ENCODE measurements at regions of chr7 and their contacts with region 1.

Region 1: DNA sequence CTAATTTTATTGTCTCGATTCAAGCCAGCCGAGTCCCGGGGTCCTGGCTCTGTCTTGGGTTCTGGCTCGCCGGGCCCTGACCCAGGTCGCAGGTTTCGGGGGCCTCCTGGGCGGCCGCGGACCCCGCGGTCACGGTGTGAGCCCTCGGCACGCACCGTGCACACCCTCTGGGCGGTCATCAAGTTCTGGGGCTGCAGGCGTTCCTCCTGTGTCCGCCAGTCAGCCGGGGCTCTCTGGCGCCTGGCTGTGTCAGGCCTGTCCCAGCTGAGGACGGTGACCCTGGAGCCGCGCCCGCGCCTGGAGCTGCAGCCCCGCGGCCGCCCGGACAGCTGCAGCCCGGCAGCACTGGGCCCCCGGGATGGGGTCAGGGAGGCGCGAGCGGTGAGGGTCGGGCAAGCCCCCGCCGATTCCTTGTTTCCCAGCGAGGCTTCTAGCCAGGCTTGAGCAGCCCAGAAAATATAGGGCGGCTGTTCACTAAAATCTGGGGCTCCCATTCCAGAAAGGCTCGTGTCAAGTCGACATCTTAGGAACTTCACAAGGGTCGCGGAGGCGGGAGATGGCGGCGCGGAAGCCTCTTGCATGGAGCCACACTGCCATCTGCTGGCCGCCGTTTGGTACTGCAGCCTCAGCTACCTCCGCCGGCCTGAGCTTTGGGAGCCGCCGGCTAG is 4.2 kb upstream of the HOXA7 start:
- DNase-seq: peak; percentile 92
- ATAC-seq: peak; percentile 43
- H3K4me3 Mint-ChIP-seq: peak overlapping the region; percentile 29
- H3K27ac Mint-ChIP-seq: no peak overlapping the region
- H3K4me1 Mint-ChIP-seq: peaks cover 12% of the 10 kb centered on the region
- H3K27me3 Mint-ChIP-seq: peaks cover 100% of the 10 kb centered on the region
- CTCF ChIP-seq: peak; percentile 100

Region 2: DNA sequence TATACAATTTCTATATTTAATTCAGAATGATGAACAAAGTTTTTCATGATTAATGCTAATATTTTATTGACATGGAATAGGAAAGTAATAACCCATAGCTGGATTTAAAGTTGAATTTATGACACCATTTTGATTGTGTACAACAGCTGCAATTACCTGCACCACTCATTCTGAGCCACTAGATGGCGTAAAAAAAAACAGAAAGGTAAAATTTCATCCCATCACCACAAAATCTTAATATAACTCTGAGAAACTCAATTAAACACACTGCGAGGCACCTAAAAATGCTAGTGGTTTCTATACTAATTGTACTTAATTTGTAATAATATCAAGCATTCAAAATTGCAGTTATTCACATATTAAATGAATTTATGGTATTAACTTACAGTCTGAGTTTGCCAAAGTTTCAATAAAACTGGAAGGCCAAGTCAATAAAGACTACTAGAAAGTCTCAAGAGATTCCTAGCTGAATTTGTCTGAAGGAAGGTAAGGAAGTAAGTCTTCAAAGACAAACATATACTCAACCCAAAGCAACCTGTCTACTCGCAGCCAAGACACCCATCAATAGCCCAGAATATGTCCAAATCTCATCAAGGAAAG is 478.8 kb before region 1 on chr7:
- CTCF ChIA-PET with region 1: interaction called, 26 read pairs
- POLR2A ChIA-PET with region 1: no interaction called
- DNase-seq: no peak
- ATAC-seq: no peak
- H3K4me3 Mint-ChIP-seq: no peak overlapping the region
- H3K27ac Mint-ChIP-seq: no peak overlapping the region
- H3K4me1 Mint-ChIP-seq: peaks cover 5% of the 10 kb centered on the region
- H3K27me3 Mint-ChIP-seq: no peaks in the 10 kb centered on the region; the same call in 1 of the 2 replicates
- CTCF ChIP-seq: peak; percentile 42; the same call in 1 of the 2 replicates

Region 3: GRCh38 chr7:26857510-26858240 is 303.0 kb before region 1 on chr7:
- CTCF ChIA-PET with region 1: interaction called, 11 read pairs
- POLR2A ChIA-PET with region 1: no interaction called
- DNase-seq: peak; percentile 61
- ATAC-seq: peak; percentile 75
- H3K4me3 Mint-ChIP-seq: peak overlapping the region; percentile 62
- H3K27ac Mint-ChIP-seq: no peak overlapping the region
- H3K4me1 Mint-ChIP-seq: peaks cover 32% of the 10 kb centered on the region
- H3K27me3 Mint-ChIP-seq: peaks cover 86% of the 10 kb centered on the region
- CTCF ChIP-seq: no peak

Region 4: DNA sequence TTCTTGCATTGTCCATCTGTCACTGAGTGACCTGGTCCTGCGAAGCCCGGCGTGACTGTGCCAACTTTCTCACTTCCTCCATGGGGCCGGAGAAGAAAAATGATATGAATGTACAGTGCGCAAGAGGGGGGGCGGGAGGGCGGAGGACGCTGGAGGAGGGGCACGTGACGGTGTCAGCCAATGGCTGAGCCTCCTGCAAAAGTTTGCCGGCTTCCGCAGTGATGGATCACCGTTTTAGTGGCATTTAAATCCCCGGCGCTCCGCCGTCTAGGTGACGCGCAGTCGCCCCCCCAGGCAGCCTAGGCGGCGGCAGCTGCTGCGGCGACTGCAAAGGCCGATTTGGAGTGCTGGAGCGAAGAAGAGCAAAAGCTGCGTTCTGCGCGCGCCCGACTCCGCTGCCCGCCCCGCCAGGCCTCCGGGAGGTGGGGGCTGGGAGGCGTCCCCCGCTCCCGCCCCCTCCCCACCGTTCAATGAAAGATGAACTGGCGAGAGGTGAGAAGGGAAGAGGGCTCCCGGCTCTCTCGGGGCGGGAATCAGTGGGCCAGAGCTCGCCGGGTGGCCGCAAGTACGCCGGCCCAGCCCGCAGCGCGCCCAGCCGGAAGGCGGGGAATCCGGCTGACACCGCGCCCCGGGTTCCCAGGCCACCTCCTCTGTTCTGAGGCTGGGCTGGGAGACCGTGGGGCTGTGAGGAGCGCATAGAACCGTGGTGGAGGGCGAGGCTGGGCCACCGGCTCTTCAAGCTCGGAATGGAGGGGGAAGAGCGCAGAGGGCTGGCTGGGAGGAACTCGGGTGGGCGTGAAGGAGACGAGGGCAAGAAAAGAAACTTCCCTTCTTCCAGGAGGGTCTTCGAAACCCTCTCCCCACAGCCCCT is 64.5 kb before region 1 on chr7 and contains the start of gene HOXA1:
- CTCF ChIA-PET with region 1: interaction called, 10 read pairs
- POLR2A ChIA-PET with region 1: interaction called, 4 read pairs
- DNase-seq: peak; percentile 71
- ATAC-seq: peak; percentile 44
- H3K4me3 Mint-ChIP-seq: peak within 1 kb of the TSS; percentile 76
- H3K27ac Mint-ChIP-seq: no peak within 1 kb of the TSS
- H3K4me1 Mint-ChIP-seq: peaks cover 69% of the 10 kb centered on the region
- H3K27me3 Mint-ChIP-seq: peaks cover 100% of the 10 kb centered on the region
- CTCF ChIP-seq: no peak
- total RNA-seq, gene HOXA1: not detected in 3 replicates

Region 5: DNA sequence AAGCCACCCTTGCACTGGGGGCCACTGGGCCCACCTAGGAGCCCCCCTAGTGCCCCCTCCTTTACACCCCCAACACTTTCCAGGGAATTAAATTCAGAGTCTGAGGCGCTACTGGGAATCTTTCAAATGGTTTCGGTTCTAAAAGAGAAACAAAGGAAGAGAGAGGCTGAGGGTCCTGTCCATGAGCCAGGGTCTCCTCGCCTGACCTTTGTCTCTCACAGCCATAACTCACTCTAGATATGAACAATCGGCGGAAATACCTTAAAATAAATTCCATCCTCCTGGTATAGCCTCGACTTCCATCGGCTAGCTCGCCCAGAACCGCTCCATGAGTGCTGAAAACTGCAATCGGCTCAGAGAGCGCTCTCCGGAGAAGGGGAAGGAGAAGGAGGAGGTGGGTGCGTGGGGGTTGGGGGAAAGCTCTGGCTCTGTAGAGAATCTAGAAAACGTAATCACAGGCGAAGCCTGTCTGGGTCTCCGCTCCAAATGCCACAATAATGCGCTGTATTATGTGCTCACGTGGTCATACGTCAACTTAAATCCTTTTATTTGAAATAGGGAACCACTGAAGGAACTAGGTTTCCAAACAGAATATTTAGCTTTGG is 42.7 kb before region 1 on chr7:
- CTCF ChIA-PET with region 1: interaction called, 12 read pairs
- POLR2A ChIA-PET with region 1: no interaction called
- DNase-seq: no peak
- ATAC-seq: no peak
- H3K4me3 Mint-ChIP-seq: no peak overlapping the region
- H3K27ac Mint-ChIP-seq: no peak overlapping the region
- H3K4me1 Mint-ChIP-seq: peaks cover 15% of the 10 kb centered on the region
- H3K27me3 Mint-ChIP-seq: peaks cover 95% of the 10 kb centered on the region
- CTCF ChIP-seq: no peak

Region 6: DNA sequence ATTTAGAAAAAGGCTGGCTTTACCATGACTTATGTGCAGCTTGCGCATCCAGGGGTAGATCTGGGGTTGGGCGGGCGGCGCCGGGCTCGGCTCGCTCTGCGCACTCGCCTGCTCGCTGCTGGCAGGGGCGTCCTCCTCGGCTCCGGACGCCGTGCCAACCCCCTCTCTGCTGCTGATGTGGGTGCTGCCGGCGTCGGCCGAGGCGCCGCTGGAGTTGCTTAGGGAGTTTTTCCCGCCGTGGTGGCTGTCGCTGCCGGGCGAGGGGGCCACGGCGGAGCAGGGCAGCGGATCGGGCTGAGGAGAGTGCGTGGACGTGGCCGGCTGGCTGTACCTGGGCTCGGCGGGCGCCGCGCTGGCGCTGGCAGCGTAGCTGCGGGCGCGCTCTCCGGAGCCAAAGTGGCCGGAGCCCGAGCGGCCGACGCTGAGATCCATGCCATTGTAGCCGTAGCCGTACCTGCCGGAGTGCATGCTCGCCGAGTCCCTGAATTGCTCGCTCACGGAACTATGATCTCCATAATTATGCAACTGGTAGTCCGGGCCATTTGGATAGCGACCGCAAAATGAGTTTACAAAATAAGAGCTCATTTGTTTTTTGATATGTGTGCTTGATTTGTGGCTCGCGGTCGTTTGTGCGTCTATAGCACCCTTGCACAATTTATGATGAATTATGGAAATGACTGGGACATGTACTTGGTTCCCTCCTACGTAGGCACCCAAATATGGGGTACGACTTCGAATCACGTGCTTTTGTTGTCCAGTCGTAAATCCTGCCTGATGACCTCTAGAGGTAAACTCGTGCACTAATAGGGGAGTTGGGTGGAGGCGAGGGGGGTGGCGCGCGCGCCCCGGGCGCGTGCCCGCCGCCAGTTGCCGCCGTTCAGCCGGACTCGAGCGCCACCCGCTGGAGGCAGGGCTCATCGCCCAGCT is 17.4 kb before region 1 on chr7 and contains the start of gene HOXA5:
- CTCF ChIA-PET with region 1: interaction called, 46 read pairs
- POLR2A ChIA-PET with region 1: no interaction called
- DNase-seq: peak; percentile 89
- ATAC-seq: peak; percentile 31
- H3K4me3 Mint-ChIP-seq: peak within 1 kb of the TSS; percentile 74
- H3K27ac Mint-ChIP-seq: no peak within 1 kb of the TSS
- H3K4me1 Mint-ChIP-seq: peaks cover 25% of the 10 kb centered on the region
- H3K27me3 Mint-ChIP-seq: peaks cover 100% of the 10 kb centered on the region
- CTCF ChIP-seq: peak; percentile 88
- total RNA-seq, gene HOXA5: 0.14 TPM in 1 of 3 replicates, not detected in the others